ENCODE measurements at regions of chr9 and their contacts with region 1.

Region 1: DNA sequence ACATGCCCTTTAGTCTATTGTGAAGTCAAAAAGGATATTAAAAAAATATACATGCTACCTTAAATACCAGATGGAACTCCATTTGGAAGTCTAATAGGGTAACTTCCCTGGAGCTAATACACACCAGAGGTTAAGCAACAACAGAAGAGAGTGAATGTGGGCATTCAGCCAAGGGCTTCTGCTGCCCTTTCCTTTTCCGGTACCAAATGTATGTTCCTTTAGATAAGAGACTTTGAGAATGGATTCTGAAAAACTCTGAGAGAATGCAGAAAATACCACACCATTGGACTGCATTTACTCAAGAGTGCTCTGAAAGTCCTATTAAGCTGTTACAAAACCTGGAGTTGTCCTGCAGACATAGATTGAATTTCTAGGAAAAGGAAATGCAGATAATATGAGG is 23.8 kb upstream of the TRPM3 start:
- DNase-seq: peak; percentile 99
- H3K4me3 ChIP-seq: no peak overlapping the region
- H3K27ac ChIP-seq: peak overlapping the region; percentile 57
- H3K4me1 ChIP-seq: peaks cover 23% of the 10 kb centered on the region
- H3K27me3 ChIP-seq: no peaks in the 10 kb centered on the region
- CTCF ChIP-seq: no peak
- POLR2A ChIP-seq: peak; percentile 24

Region 2: DNA sequence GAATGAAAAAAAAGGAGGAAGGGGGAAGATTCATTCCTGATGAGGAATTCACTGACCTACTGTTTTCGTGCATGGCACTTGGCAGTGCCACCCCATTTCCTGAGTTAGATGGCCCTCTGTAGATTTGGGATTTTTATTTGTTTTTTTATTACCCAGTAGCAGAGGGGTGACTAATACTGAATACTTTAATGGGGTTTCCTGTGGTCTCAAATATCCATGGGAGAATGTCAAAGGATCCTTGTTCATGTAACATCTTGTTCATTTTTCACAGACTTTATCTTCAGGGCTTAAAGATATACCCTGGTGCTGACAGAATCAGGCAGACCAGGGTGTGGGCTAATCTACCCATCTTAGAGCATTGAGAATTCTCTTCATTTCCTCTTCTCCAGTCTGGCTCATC is 1008.5 kb before region 1 on chr9:
- CTCF ChIA-PET with region 1: no interaction called
- POLR2A ChIA-PET with region 1: no interaction called
- dilution Hi-C with region 1: no loop called
- intact Hi-C with region 1: loop called (anchors 5 kb)
- DNase-seq: peak; percentile 64
- H3K4me3 ChIP-seq: no peak overlapping the region
- H3K27ac ChIP-seq: no peak overlapping the region
- H3K4me1 ChIP-seq: peaks cover 22% of the 10 kb centered on the region
- H3K27me3 ChIP-seq: no peaks in the 10 kb centered on the region
- CTCF ChIP-seq: no peak
- POLR2A ChIP-seq: no peak

Region 3: DNA sequence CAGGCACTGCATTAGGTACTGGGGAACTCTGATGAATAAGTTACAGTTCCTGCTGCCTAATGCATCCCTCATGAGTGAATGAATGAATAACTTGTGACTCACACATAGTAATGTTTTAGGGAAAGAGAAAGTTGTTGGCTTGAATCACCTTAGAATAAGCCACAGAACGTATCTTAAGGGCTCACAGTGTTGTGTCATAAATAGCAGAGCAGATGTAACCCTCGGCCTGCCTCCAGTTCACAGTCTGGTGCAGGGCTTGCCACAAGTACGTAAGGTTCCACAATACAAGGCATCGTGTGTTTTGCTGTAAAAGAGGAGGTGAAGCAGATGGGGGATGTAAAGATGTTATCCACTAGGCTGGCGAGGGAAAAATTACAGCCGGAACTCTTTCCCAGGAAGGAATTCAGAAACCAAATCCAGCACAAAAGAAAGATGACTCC is 242.5 kb before region 1 on chr9:
- CTCF ChIA-PET with region 1: no interaction called
- POLR2A ChIA-PET with region 1: interaction called, 3 read pairs
- dilution Hi-C with region 1: no loop called
- intact Hi-C with region 1: loop called (anchors 1 kb)
- DNase-seq: peak; percentile 87
- H3K4me3 ChIP-seq: peak overlapping the region in 2 of 3 experiments; percentile 20 to 57
- H3K27ac ChIP-seq: peak overlapping the region; percentile 95
- H3K4me1 ChIP-seq: peaks cover 29% of the 10 kb centered on the region
- H3K27me3 ChIP-seq: no peaks in the 10 kb centered on the region
- CTCF ChIP-seq: no peak
- POLR2A ChIP-seq: peak; percentile 61

Region 4: DNA sequence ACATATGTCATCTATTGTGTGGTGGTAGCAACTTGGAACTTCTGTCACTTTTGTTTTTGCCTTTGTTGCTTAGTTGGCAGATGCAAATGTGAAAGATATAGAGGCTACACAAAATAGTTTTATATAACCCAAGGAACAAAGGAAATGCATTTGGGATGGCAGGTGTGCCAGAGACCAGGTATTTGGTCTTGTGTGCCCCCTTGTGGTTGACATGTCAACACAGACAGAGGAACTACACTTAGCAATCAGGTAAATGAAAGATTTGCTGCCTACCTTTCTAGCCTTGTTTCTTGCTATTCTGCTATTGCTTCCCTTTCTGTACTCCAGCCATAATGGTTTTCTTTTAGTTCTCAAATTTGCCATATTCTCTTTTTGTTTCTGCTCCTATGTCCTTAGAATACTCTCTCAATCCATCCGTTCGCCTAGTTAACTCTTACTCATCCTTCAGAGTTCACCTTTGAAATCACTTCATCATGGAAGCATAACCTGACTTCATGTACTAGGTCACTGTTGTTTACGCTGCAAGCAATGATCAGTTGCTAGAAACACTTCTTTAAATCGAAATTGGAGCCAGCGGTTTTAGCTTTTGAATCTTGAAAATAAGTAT is 143.3 kb before region 1 on chr9:
- CTCF ChIA-PET with region 1: no interaction called
- POLR2A ChIA-PET with region 1: no interaction called
- dilution Hi-C with region 1: no loop called
- intact Hi-C with region 1: loop called (anchors 5 kb)
- DNase-seq: peak; percentile 26
- H3K4me3 ChIP-seq: no peak overlapping the region
- H3K27ac ChIP-seq: no peak overlapping the region
- H3K4me1 ChIP-seq: no peaks in the 10 kb centered on the region
- H3K27me3 ChIP-seq: no peaks in the 10 kb centered on the region
- CTCF ChIP-seq: peak; percentile 26 to 51
- POLR2A ChIP-seq: no peak

Region 5: DNA sequence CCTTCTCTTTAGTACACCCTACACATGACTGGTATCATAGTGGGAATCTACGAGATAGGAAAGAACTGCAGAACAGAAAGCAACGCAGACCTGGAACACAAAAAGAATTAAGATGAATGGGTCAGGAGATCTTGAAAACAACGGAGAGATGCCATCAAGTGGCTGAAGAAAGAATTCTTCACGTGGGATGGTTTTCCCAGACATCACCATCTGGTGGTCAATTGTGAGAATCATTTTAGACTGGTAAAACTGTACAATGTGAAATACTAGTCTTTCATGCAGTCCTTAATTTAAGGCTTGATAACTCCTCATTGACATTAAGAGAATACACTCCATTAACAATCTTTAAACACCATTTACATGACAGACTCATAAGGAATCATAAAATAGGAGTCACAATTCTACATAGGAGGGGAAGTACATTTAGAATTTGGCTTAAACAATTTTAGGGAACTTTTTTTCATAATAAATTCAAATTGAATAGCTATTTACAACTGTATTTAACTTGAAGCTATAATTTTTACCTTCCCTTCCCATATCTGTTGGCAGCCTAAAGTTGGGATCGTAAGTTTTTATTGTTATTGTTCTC is 104.6 kb after region 1 on chr9:
- CTCF ChIA-PET with region 1: interaction called, 4 read pairs
- POLR2A ChIA-PET with region 1: no interaction called
- dilution Hi-C with region 1: no loop called
- intact Hi-C with region 1: loop called (anchors 2 kb)
- DNase-seq: peak; percentile 78
- H3K4me3 ChIP-seq: no peak overlapping the region
- H3K27ac ChIP-seq: no peak overlapping the region
- H3K4me1 ChIP-seq: no peaks in the 10 kb centered on the region
- H3K27me3 ChIP-seq: peaks cover 4 to 9% of the 10 kb centered on the region in 2 experiments
- CTCF ChIP-seq: peak; percentile 69
- POLR2A ChIP-seq: no peak